ENCODE measurements at regions of chr11 and their contacts with region 1.

Region 1: GRCh38 chr11:60455531-60456042 is at the start of gene MS4A1:
- DNase-seq: peak; percentile 44
- ATAC-seq: peak; percentile 83
- H3K4me3 Mint-ChIP-seq: peak within 1 kb of the TSS; percentile 97
- H3K27ac Mint-ChIP-seq: peak within 1 kb of the TSS; percentile 97
- H3K4me1 Mint-ChIP-seq: peaks cover 54% of the 10 kb centered on the region
- H3K27me3 Mint-ChIP-seq: no peaks in the 10 kb centered on the region
- CTCF ChIP-seq: no peak
- total RNA-seq, gene MS4A1: 1,910 and 2,024 TPM in 2 replicates

Region 2: GRCh38 chr11:60165538-60165937 is 290.0 kb before region 1 on chr11:
- CTCF ChIA-PET with region 1: no interaction called
- POLR2A ChIA-PET with region 1: no interaction called
- intact Hi-C with region 1: no loop called
- DNase-seq: no peak
- ATAC-seq: no peak
- H3K4me3 Mint-ChIP-seq: no peak overlapping the region
- H3K27ac Mint-ChIP-seq: no peak overlapping the region
- H3K4me1 Mint-ChIP-seq: no peaks in the 10 kb centered on the region
- H3K27me3 Mint-ChIP-seq: peaks cover 9% of the 10 kb centered on the region
- CTCF ChIP-seq: no peak

Region 3: GRCh38 chr11:60310407-60311279 is 144.9 kb before region 1 on chr11:
- CTCF ChIA-PET with region 1: no interaction called
- POLR2A ChIA-PET with region 1: interaction called, 14 read pairs
- intact Hi-C with region 1: no loop called
- DNase-seq: no peak
- ATAC-seq: peak; percentile 75
- H3K4me3 Mint-ChIP-seq: peak overlapping the region; percentile 58
- H3K27ac Mint-ChIP-seq: peak overlapping the region; percentile 91
- H3K4me1 Mint-ChIP-seq: peaks cover 49% of the 10 kb centered on the region
- H3K27me3 Mint-ChIP-seq: no peaks in the 10 kb centered on the region
- CTCF ChIP-seq: no peak

Region 4: GRCh38 chr11:60378354-60378753 is 77.2 kb before region 1 on chr11 and contains the start of gene MS4A7:
- CTCF ChIA-PET with region 1: interaction called, 7 read pairs
- POLR2A ChIA-PET with region 1: interaction called, 800 read pairs
- intact Hi-C with region 1: loop called (anchors 1 kb)
- DNase-seq: peak; percentile 41
- ATAC-seq: peak; percentile 85
- H3K4me3 Mint-ChIP-seq: peak within 1 kb of the TSS; percentile 90
- H3K27ac Mint-ChIP-seq: peak within 1 kb of the TSS; percentile 99
- H3K4me1 Mint-ChIP-seq: peaks cover 84% of the 10 kb centered on the region
- H3K27me3 Mint-ChIP-seq: no peaks in the 10 kb centered on the region
- CTCF ChIP-seq: no peak
- total RNA-seq, gene MS4A7: 43.1 and 51.1 TPM in 2 replicates

Region 5: GRCh38 chr11:60420015-60420414 is 35.6 kb before region 1 on chr11:
- CTCF ChIA-PET with region 1: no interaction called
- POLR2A ChIA-PET with region 1: interaction called, 11 read pairs
- intact Hi-C with region 1: no loop called
- DNase-seq: no peak
- ATAC-seq: no peak
- H3K4me3 Mint-ChIP-seq: no peak overlapping the region
- H3K27ac Mint-ChIP-seq: no peak overlapping the region
- H3K4me1 Mint-ChIP-seq: peaks cover 24% of the 10 kb centered on the region
- H3K27me3 Mint-ChIP-seq: no peaks in the 10 kb centered on the region
- CTCF ChIP-seq: no peak

Region 6: GRCh38 chr11:60485986-60486385 is 30.4 kb after region 1 on chr11:
- CTCF ChIA-PET with region 1: interaction called, 22 read pairs
- POLR2A ChIA-PET with region 1: interaction called, 251 read pairs
- intact Hi-C with region 1: loop called (anchors 1 kb)
- DNase-seq: peak; percentile 40
- ATAC-seq: peak; percentile 95
- H3K4me3 Mint-ChIP-seq: peak overlapping the region; percentile 42
- H3K27ac Mint-ChIP-seq: peak overlapping the region; percentile 63
- H3K4me1 Mint-ChIP-seq: peaks cover 55% of the 10 kb centered on the region
- H3K27me3 Mint-ChIP-seq: no peaks in the 10 kb centered on the region
- CTCF ChIP-seq: peak; percentile 44

Region 7: GRCh38 chr11:60634126-60634525 is 178.5 kb after region 1 on chr11:
- CTCF ChIA-PET with region 1: interaction called, 3 read pairs
- POLR2A ChIA-PET with region 1: interaction called, 12 read pairs
- intact Hi-C with region 1: no loop called
- DNase-seq: no peak
- ATAC-seq: peak; percentile 59
- H3K4me3 Mint-ChIP-seq: peak overlapping the region; percentile 58
- H3K27ac Mint-ChIP-seq: peak overlapping the region; percentile 78
- H3K4me1 Mint-ChIP-seq: peaks cover 41% of the 10 kb centered on the region
- H3K27me3 Mint-ChIP-seq: peaks cover 5% of the 10 kb centered on the region
- CTCF ChIP-seq: peak; percentile 42

Region 8: DNA sequence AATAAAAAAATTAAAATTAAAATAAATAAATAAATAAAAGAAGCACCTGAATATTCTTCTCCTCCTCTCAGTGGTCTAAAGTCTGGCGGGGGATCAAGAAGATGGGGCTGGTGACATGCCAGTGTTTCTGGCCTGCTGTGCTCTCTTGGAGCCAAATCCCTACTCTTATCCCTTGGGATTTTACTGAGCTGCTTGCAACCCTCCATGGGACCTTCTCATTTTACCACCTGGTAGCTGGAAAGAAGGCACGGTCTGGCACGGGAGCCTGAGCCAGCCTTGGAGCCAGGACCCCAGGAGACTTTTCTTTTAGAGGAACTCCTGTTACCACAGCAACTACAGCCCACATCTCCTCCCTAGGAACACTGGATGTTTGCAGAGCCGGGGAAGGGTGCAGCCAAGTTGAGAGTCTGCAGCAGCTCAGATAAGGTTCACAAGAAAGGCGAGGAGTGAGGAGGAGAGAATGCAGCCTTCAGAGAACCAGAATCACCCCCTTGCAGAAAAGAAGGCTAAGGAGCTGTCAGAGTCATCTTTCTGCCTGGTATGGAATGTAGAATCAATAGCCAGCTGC is 537.3 kb after region 1 on chr11:
- CTCF ChIA-PET with region 1: no interaction called
- POLR2A ChIA-PET with region 1: no interaction called
- intact Hi-C with region 1: no loop called
- DNase-seq: no peak
- ATAC-seq: no peak
- H3K4me3 Mint-ChIP-seq: no peak overlapping the region
- H3K27ac Mint-ChIP-seq: no peak overlapping the region
- H3K4me1 Mint-ChIP-seq: peaks cover 21% of the 10 kb centered on the region
- H3K27me3 Mint-ChIP-seq: peaks cover 4% of the 10 kb centered on the region
- CTCF ChIP-seq: no peak